CD8-positive, alpha-beta T cell (primary cell): ENCODE measurements at regions of chr12 and their contacts with region 1.

Region 1: DNA sequence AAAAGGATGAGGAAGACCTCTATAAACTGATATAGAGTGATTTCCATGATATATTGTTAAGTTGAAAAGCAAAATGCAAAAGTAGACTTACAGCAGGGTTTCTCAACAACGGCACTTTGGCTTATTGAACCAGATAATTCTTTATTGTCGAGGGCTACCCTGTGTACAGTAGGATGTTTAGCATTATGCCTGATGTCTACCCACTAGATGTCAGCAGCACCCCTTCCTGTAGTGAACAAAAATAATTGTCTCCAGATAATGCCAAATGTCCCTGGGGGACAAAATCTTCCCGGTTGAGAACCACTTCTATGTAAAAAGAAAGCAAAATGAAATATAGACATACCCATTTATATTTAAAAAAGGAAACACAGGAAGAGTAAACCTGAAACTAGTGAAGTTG is 32.4 kb downstream of the ABCD2 start:
- DNase-seq: peak in 5 of 9 experiments; percentile 1 to 67 (median 19)
- ATAC-seq: peak; percentile 75
- H3K4me3 ChIP-seq: no peak overlapping the region
- H3K4me3 Mint-ChIP-seq: no peak overlapping the region
- H3K27ac ChIP-seq: no peak overlapping the region
- H3K27ac Mint-ChIP-seq: no peak overlapping the region
- H3K4me1 ChIP-seq: no peaks in the 10 kb centered on the region
- H3K4me1 Mint-ChIP-seq: peaks cover 14% of the 10 kb centered on the region
- H3K27me3 ChIP-seq: no peaks in the 10 kb centered on the region
- H3K27me3 Mint-ChIP-seq: no peaks in the 10 kb centered on the region
- CTCF ChIP-seq: peak; percentile 53

Region 2: GRCh38 chr12:39329018-39329417 is 258.2 kb before region 1 on chr12:
- CTCF ChIA-PET with region 1: no interaction called
- POLR2A ChIA-PET with region 1: no interaction called
- intact Hi-C with region 1: loop called in 1 of 2 experiments (anchors 10 kb)
- DNase-seq: no peak
- ATAC-seq: no peak
- H3K4me3 ChIP-seq: no peak overlapping the region
- H3K4me3 Mint-ChIP-seq: no peak overlapping the region
- H3K27ac ChIP-seq: no peak overlapping the region
- H3K27ac Mint-ChIP-seq: no peak overlapping the region
- H3K4me1 ChIP-seq: peaks cover 10% of the 10 kb centered on the region
- H3K4me1 Mint-ChIP-seq: peaks cover 15% of the 10 kb centered on the region
- H3K27me3 ChIP-seq: no peaks in the 10 kb centered on the region
- H3K27me3 Mint-ChIP-seq: no peaks in the 10 kb centered on the region
- CTCF ChIP-seq: no peak

Region 3: DNA sequence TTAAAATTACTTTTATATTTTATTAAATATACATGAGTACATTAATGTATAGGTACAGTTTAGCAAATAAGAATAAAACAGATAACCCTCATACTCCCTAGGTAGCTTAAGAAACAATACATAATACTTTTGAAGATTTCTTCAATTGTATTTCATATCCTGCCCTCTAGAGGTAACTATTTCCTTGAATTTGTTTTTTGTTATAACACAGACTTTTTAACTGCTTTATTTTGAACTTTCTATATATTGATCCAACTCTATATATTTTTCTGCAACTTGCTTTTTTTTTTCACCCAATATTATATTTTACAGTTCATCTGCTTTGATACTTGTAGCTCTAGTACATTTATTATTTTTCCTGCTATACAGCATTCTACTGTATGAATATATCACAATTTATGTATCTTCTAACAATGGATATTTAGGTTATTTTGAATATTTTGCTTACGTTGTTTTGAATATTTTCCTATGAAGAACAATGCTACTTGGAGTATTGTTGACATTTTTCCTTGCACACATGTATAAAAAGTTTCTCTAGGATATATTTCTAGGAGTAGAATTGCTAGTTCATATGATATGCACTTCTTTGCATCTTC is 105.1 kb after region 1 on chr12:
- CTCF ChIA-PET with region 1: interaction called, 5 read pairs
- POLR2A ChIA-PET with region 1: no interaction called
- intact Hi-C with region 1: loop called (anchors 1 kb)
- DNase-seq: peak in 2 of 9 experiments; percentile 23 to 47
- ATAC-seq: peak; percentile 58
- H3K4me3 ChIP-seq: no peak overlapping the region
- H3K4me3 Mint-ChIP-seq: no peak overlapping the region
- H3K27ac ChIP-seq: no peak overlapping the region
- H3K27ac Mint-ChIP-seq: no peak overlapping the region
- H3K4me1 ChIP-seq: peaks cover 7% of the 10 kb centered on the region
- H3K4me1 Mint-ChIP-seq: peaks cover 6% of the 10 kb centered on the region
- H3K27me3 ChIP-seq: no peaks in the 10 kb centered on the region
- H3K27me3 Mint-ChIP-seq: no peaks in the 10 kb centered on the region
- CTCF ChIP-seq: peak; percentile 61

Region 4: DNA sequence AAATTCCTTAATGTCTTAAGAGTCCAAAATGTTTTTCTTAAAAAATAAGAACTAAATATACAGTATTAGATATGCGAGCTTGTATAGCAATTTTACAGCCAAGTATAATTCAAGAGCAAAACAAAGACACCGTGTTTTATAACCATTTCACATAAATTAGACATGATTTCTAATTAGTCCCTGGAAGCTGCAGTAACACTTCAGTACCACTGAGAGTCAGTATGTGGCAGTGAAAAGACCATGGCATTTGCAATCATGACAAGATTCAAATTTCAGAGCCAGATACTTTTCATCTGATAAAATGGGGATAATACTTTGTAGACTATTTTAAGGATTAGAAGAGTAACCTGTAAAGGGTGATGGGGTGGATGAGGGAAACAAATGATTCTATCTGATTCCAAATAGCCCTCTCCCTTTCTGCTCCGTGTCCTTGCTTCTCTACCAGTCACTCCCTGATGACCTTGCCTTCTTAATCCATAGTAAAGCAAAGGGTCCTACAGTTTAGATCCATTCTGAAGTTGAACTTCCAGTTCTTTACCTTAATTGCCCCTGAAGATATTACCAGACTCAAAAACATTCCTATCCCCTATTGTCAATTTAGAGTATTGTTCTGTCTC is 177.8 kb after region 1 on chr12:
- CTCF ChIA-PET with region 1: no interaction called
- POLR2A ChIA-PET with region 1: no interaction called
- intact Hi-C with region 1: loop called (anchors 5 kb)
- DNase-seq: peak in 2 of 9 experiments; percentile 19 to 37
- ATAC-seq: no peak
- H3K4me3 ChIP-seq: no peak overlapping the region
- H3K4me3 Mint-ChIP-seq: no peak overlapping the region
- H3K27ac ChIP-seq: no peak overlapping the region
- H3K27ac Mint-ChIP-seq: no peak overlapping the region
- H3K4me1 ChIP-seq: no peaks in the 10 kb centered on the region
- H3K4me1 Mint-ChIP-seq: no peaks in the 10 kb centered on the region
- H3K27me3 ChIP-seq: no peaks in the 10 kb centered on the region
- H3K27me3 Mint-ChIP-seq: no peaks in the 10 kb centered on the region
- CTCF ChIP-seq: peak; percentile 63